GM10248 (cell line): ENCODE measurements at regions of chr3 and their contacts with region 1.

Region 1: GRCh38 chr3:8987645-8988383 is 24.5 kb upstream of the RAD18 start:
- DNase-seq: peak; percentile 84
- CTCF ChIP-seq: peak; percentile 75

Region 2: GRCh38 chr3:8970971-8971589 is 16.7 kb before region 1 on chr3:
- CTCF ChIA-PET with region 1: interaction called, 90 read pairs
- POLR2A ChIA-PET with region 1: interaction called, 3 read pairs
- DNase-seq: peak; percentile 64
- CTCF ChIP-seq: peak; percentile 84

Region 3: GRCh38 chr3:9013782-9014563 is 26.2 kb after region 1 on chr3:
- CTCF ChIA-PET with region 1: interaction called, 26 read pairs
- POLR2A ChIA-PET with region 1: no interaction called
- DNase-seq: no peak
- CTCF ChIP-seq: no peak

Region 4: GRCh38 chr3:9028134-9028533 is 40.3 kb after region 1 on chr3:
- CTCF ChIA-PET with region 1: no interaction called
- POLR2A ChIA-PET with region 1: no interaction called
- DNase-seq: no peak
- CTCF ChIP-seq: no peak

Region 5: DNA sequence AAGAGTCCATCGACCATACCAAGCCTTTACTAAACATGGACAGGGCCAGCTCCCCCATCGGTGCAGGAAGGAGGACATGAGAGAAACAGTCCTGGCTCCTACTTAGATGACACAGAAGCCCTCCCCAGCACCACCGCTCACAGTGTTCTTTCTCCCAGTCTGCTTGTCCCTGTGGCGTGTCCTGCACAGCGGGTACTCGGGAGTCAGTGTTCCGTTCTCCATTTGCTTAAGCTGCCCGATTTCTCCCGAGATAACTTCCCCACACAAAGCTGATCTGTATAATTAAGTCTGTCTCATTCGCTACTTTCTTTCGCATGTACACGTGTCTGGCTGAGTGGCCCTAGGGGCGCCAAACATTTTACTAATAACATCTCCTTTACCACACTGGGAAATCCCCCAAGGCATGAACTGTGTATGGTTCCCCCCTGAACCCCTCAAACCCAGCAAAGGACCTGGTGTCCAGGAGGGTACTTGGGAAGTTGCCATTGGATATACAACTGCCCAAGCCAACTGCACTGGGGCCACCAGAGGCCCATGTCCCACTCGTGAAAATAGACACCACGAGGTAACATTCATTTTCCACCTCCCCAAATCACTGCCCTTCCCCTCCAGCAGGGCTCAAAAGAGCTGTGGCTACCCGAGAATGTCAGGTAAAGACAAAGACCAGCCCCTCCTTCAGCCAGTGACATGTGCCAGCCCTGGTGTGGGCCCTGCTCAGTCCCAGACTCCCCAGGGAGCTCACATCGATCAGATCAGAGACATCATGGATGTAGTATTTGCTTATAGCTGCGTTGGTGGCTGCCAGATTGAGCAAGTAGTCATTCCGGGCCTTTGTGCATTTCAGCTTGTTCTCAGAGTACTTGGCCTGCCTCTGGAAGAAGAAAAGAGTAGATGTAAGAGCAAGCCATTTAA is 71.9 kb after region 1 on chr3:
- CTCF ChIA-PET with region 1: interaction called, 11 read pairs
- POLR2A ChIA-PET with region 1: no interaction called
- DNase-seq: no peak
- CTCF ChIP-seq: no peak

Region 6: DNA sequence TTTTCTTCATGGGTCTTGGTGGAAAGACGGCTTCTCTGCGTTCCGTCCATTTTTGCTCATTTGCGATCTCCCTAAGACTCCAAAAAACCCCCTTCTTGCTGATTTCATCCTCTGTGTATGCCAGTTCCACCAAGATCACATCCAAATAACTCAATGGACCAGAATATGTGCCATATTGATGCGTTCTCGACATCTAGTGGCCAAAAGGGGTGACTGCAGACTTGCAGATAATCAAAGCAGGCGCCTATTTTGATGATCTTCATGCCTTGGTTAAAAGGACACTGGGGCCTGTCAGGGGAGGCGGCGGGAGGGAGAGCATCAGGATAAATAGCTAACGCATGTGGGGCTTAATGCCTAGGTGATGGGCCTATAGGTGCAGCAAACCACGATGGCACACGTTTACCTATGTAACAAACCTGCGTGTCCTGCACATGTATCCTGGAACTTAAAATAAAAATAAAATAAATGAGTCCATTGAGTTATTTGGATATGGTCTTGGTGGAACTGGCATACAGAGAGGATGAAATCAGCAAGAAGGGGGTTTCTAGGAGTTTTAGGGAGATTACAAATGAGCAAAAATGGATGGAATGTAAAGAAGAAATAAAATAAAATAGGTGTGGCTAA is 79.7 kb after region 1 on chr3:
- CTCF ChIA-PET with region 1: interaction called, 11 read pairs
- POLR2A ChIA-PET with region 1: no interaction called
- DNase-seq: peak; percentile 64
- CTCF ChIP-seq: peak; percentile 73

Region 7: DNA sequence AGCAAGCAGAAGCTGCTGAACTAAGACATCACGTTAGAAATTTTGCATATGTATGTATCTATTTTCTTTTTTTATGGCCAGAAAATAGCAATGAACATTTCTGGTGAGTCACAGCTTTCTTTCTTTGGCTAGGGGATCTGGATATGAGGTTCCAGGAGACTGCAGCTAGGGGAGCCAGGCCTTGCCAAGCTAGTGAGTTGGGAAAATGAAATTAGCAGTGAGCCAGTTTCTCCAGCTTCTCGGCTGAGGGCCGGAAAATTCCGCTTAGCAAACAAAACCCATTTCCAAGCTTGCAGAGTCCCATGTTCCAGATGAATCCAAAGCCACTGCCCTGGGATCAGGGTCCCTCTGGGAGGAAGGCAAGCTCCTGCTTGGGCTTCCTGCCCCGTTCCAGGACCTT is 124.1 kb after region 1 on chr3:
- CTCF ChIA-PET with region 1: no interaction called
- POLR2A ChIA-PET with region 1: no interaction called
- DNase-seq: no peak
- CTCF ChIP-seq: no peak

Region 8: DNA sequence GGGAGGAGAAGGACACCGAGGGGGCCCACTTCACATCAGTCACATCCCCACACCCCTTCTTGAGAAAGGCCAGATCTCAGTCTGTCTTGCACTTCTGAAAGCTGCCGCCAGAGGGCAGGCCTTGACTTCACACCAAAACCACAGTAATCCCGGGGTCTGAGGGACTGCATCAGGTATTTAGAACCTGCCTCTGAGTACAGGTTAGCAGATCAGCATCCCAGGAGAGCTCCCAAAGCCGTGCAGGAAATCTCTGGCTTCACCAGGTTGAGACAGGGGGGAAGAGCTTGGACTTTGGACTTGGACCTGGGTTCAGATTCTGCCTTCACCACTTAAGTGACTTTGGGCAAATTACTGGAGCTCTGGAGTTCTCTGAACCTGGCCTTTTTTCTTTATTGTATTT is 515.5 kb after region 1 on chr3:
- CTCF ChIA-PET with region 1: no interaction called
- POLR2A ChIA-PET with region 1: no interaction called
- DNase-seq: peak; percentile 78
- CTCF ChIP-seq: peak; percentile 90